HepG2 (cell line): ENCODE measurements at regions of chr12 and their contacts with region 1.

Region 1: GRCh38 chr12:84172823-84173424 is 739.7 kb downstream of the SLC6A15 start:
- DNase-seq: no peak
- ATAC-seq: no peak
- H3K4me3 ChIP-seq: no peak overlapping the region
- H3K27ac ChIP-seq: no peak overlapping the region
- H3K4me1 ChIP-seq: no peaks in the 10 kb centered on the region
- H3K27me3 ChIP-seq: no peaks in the 10 kb centered on the region
- CTCF ChIP-seq: no peak
- EP300 ChIP-seq: no peak
- POLR2A ChIP-seq: no peak
- RAD21 ChIP-seq: no peak

Region 2: GRCh38 chr12:84201976-84202375 is 29.1 kb after region 1 on chr12:
- CTCF ChIA-PET with region 1: no interaction called
- POLR2A ChIA-PET with region 1: no interaction called
- in situ Hi-C with region 1: no loop called
- intact Hi-C with region 1: no loop called
- DNase-seq: no peak
- ATAC-seq: no peak
- H3K4me3 ChIP-seq: no peak overlapping the region
- H3K27ac ChIP-seq: no peak overlapping the region
- H3K4me1 ChIP-seq: no peaks in the 10 kb centered on the region
- H3K27me3 ChIP-seq: no peaks in the 10 kb centered on the region
- CTCF ChIP-seq: no peak
- EP300 ChIP-seq: no peak
- POLR2A ChIP-seq: no peak
- RAD21 ChIP-seq: no peak

Region 3: DNA sequence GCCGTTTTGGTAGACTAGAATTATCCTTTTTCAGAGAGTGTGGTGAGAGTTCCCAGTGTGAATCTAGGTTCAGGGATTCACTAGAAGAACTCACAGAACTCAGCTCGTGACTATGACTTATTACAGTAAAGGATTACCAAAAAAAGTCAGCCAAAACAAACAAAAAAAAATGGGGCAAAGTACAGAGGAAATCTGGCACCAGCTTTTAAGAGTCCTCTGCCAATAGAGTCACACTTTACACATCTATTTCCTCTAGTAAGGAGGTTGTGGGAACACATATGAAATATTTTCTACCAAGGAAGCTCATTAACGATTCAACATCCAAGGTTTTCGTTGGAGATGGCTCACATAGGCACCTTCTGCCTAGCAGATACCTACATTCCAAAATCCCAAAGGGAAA is 834.9 kb after region 1 on chr12:
- CTCF ChIA-PET with region 1: no interaction called
- POLR2A ChIA-PET with region 1: no interaction called
- in situ Hi-C with region 1: no loop called
- intact Hi-C with region 1: loop called (anchors 5 kb)
- DNase-seq: no peak
- ATAC-seq: no peak
- H3K4me3 ChIP-seq: no peak overlapping the region
- H3K27ac ChIP-seq: no peak overlapping the region
- H3K4me1 ChIP-seq: no peaks in the 10 kb centered on the region
- H3K27me3 ChIP-seq: no peaks in the 10 kb centered on the region
- CTCF ChIP-seq: no peak
- EP300 ChIP-seq: no peak
- POLR2A ChIP-seq: no peak
- RAD21 ChIP-seq: no peak